Mammary epithelial cell (primary cell): ENCODE measurements at regions of chr5 and their contacts with region 1.

Region 1: DNA sequence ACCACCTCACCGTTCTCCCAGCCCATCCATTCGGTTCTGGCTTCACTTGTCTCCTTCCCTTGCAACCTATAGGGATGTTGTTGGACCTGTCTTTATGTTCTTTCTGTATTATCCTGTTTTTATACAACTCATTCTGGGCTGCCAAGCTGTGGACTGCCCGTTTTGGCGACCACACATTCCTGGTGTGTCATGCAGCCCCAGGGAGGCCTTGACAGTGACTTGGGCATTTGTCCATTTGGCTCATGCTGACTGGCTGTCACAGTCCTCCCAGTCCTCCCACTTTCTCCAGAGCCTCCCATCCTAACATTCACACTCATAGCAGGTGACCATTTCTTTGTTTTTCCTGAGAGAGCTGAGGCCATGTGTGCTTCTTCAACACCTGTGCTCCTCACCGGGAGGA is 136.4 kb downstream of the SLF1 start:
- DNase-seq: peak; percentile 3
- H3K4me3 ChIP-seq: no peak overlapping the region
- H3K27ac ChIP-seq: no peak overlapping the region
- H3K4me1 ChIP-seq: no peaks in the 10 kb centered on the region
- H3K27me3 ChIP-seq: no peaks in the 10 kb centered on the region
- CTCF ChIP-seq: no peak

Region 2: GRCh38 chr5:94674490-94675382 is 80.1 kb before region 1 on chr5:
- CTCF ChIA-PET with region 1: no interaction called
- dilution Hi-C with region 1: loop called (anchors 5 kb)
- in situ Hi-C with region 1: no loop called
- intact Hi-C with region 1: no loop called
- DNase-seq: peak; percentile 33
- H3K4me3 ChIP-seq: no peak overlapping the region
- H3K27ac ChIP-seq: no peak overlapping the region
- H3K4me1 ChIP-seq: peaks cover 5% of the 10 kb centered on the region
- H3K27me3 ChIP-seq: no peaks in the 10 kb centered on the region
- CTCF ChIP-seq: no peak

Region 3: DNA sequence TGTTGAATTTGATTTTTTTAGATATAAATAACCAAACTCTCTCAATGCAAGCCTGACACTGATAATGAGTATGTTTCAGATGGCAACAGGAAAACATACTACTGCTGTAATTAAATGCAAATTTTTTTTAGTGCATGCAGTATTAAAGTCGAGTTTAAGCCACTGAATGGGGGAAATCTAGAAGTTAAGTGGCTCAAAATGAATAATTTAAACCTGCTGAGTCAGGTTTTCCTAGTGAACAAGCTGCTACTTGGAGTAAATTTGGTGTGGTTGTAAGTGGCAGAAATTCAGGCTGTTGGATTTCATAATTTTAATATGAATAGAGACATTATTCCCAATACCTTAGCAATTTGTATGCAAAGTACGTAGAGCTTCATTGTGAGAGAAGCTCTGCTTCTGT is 14.5 kb before region 1 on chr5:
- CTCF ChIA-PET with region 1: no interaction called
- dilution Hi-C with region 1: no loop called
- in situ Hi-C with region 1: no loop called
- intact Hi-C with region 1: no loop called
- DNase-seq: no peak
- H3K4me3 ChIP-seq: no peak overlapping the region
- H3K27ac ChIP-seq: no peak overlapping the region
- H3K4me1 ChIP-seq: no peaks in the 10 kb centered on the region
- H3K27me3 ChIP-seq: no peaks in the 10 kb centered on the region
- CTCF ChIP-seq: no peak

Region 4: GRCh38 chr5:95471942-95472341 is 717.1 kb after region 1 on chr5:
- CTCF ChIA-PET with region 1: no interaction called
- dilution Hi-C with region 1: no loop called
- in situ Hi-C with region 1: no loop called
- intact Hi-C with region 1: no loop called
- DNase-seq: peak; percentile 30
- H3K4me3 ChIP-seq: no peak overlapping the region
- H3K27ac ChIP-seq: no peak overlapping the region
- H3K4me1 ChIP-seq: no peaks in the 10 kb centered on the region
- H3K27me3 ChIP-seq: no peaks in the 10 kb centered on the region
- CTCF ChIP-seq: no peak